Activated CD4-positive, alpha-beta T cell treated with anti-CD3 and anti-CD28 coated beads for 36 hours (primary cell): ENCODE measurements at regions of chr1 and their contacts with region 1.

Region 1: DNA sequence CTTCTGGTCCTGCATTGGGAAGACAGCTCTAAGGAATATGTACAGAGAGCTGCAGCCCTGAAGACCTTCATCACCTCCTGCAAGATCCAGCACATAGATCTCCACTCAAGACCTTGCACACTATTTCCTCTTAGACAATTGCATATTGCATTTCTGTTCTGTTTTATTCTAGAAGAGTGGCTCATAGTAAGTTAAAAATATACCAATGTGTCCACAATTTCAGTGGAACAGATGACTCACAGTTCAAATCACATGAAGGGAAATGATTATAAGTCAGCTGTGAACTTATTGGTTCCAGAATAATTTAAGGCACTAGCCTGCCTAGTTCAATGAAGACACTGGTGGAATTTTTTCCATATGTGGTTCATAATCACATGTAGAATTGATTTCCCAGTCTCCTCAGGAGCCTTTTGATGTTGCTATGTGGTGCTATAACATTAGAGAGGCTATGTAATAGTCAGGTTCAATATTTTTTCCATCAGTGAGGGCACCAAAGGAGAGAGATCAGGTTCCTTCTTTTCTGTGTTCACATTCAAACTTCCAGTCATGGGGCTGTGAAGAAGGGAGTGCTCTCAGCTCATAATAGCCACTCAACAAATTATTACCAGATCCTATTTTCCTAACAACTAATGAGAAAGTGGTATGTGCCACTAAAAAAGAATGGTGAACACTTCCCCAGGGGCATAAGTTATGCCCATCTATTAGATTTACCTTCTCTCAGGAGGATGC is 9.8 kb upstream of the AK5 start:
- DNase-seq: no peak
- ATAC-seq: no peak
- H3K4me3 Mint-ChIP-seq: no peak overlapping the region
- H3K27ac Mint-ChIP-seq: no peak overlapping the region
- H3K4me1 Mint-ChIP-seq: peaks cover 4% of the 10 kb centered on the region
- H3K27me3 Mint-ChIP-seq: no peaks in the 10 kb centered on the region

Region 2: DNA sequence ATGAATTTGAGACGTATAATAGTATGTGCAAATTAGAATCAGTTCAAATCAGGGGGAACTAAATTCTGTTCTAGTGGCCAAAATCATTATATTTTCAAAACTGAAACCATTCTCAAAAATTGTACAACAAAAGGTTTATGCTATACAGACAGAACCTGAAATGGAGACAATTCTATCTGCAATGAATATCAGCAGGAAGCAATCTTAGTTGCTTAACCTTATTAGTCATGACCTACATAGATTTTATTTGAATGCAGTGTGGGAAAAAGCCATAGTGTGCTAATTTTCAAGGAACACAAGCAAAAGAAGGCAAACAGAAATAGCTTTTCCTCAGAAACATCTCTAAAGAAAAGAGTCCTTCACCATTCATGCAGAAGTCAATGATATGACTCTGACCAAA is 16.3 kb after region 1 on chr1:
- CTCF ChIA-PET with region 1: no interaction called
- POLR2A ChIA-PET with region 1: no interaction called
- intact Hi-C with region 1: loop called in 1 of 2 experiments (anchors 2 kb)
- DNase-seq: no peak
- ATAC-seq: no peak
- H3K4me3 Mint-ChIP-seq: no peak overlapping the region
- H3K27ac Mint-ChIP-seq: no peak overlapping the region
- H3K4me1 Mint-ChIP-seq: peaks cover 10% of the 10 kb centered on the region
- H3K27me3 Mint-ChIP-seq: no peaks in the 10 kb centered on the region

Region 3: DNA sequence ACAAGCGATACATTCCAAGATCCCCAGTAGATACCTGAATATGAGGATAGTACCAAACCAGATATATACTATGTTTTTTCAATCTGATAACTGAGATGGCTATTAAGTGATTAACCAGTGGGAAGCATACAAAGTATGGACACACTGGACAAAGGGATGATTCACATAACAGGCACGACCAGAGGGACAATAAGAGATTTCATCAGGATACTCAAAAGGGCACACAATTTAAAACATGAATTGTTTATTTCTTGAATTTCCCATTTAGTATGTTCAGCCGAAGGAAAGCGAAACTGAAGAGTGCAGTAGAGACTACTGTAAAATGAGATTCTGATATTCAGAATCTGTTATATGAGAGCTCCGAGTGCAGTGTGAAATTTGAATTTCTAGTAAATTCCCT is 399.8 kb after region 1 on chr1:
- CTCF ChIA-PET with region 1: no interaction called
- POLR2A ChIA-PET with region 1: no interaction called
- intact Hi-C with region 1: no loop called
- DNase-seq: no peak
- ATAC-seq: no peak
- H3K4me3 Mint-ChIP-seq: peak overlapping the region; percentile 21
- H3K27ac Mint-ChIP-seq: peak overlapping the region; percentile 73
- H3K4me1 Mint-ChIP-seq: peaks cover 73% of the 10 kb centered on the region
- H3K27me3 Mint-ChIP-seq: no peaks in the 10 kb centered on the region